Posterior cingulate gyrus (tissue), 11 donors: ENCODE measurements at regions of chr13 and their contacts with region 1.

Region 1: DNA sequence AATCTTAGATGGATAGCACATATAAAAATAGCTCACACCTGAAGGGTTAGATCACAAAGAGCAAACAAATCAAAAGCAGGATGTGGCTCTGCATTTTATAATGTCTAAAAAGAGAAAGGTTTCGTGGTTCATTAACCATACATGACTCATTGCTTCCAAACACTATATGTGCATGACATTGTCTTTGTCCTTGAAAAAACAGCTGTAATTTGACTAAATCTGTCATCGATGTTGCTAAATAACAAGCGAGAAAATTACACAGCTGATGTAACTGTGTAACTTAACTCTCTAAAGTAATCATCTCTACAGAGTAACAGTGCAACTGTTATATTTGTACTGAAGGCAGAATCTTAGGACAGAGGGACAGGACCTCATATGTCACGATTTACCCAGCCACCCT is 383.1 kb upstream of the GPC6 start:
- DNase-seq: no peak

Region 2: GRCh38 chr13:92739306-92739818 is 104.2 kb before region 1 on chr13:
- intact Hi-C with region 1: loop called (anchors 10 kb)
- DNase-seq: no peak

Region 3: GRCh38 chr13:92769046-92769445 is 74.5 kb before region 1 on chr13:
- intact Hi-C with region 1: no loop called
- DNase-seq: no peak

Region 4: GRCh38 chr13:92974905-92975429 is 131.4 kb after region 1 on chr13:
- intact Hi-C with region 1: no loop called
- DNase-seq: peak in 2 of 10 donors; percentile 74 to 76

Region 5: DNA sequence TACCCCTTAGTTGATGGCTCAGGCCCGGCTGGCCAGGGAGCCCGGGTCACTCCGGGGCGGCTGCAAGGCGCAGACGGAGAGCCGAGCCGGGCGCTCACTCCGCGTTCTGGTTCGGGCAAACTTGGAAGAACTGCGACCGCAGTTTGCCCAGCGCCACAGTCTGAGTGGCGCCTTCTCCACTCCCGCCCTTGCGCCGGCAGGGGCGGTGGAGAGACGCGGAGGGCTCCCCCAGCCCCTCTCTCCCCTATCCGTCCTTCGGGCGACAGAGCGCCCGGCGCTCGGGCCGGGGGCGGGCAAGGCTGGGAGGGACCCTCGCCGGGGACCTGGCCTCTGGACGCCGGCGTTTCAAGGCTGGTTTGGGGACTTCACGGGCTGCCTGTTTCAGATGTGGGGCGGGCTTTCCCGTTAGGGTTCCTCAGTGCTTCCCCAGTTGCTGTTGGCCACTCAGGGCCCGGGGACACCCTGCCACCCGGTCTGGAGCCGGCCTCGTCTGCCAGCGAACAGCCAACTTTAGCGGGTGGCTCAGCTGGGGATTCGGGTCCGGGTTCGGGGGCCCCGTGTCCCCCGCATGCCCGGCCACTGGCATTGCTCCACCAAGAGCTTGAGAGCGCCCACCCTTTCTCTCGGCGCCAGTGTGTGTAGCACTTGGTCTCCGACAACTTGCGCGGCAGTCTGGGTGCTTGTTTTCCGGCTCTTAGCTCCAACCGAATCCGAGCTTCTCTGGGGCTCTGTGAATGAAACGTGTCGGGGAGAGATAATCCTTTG is 384.5 kb after region 1 on chr13:
- intact Hi-C with region 1: no loop called
- DNase-seq: peak in 9 of 10 donors; percentile 32 to 91 (median 60)